ENCODE measurements at regions of chr16 and their contacts with region 1.

Region 1: GRCh38 chr16:25270577-25270976 is 12.9 kb upstream of the ZKSCAN2 start:
- DNase-seq: no peak
- ATAC-seq: no peak
- H3K4me3 ChIP-seq: no peak overlapping the region
- H3K27ac ChIP-seq: no peak overlapping the region
- H3K4me1 ChIP-seq: no peaks in the 10 kb centered on the region
- H3K27me3 ChIP-seq: no peaks in the 10 kb centered on the region

Region 2: DNA sequence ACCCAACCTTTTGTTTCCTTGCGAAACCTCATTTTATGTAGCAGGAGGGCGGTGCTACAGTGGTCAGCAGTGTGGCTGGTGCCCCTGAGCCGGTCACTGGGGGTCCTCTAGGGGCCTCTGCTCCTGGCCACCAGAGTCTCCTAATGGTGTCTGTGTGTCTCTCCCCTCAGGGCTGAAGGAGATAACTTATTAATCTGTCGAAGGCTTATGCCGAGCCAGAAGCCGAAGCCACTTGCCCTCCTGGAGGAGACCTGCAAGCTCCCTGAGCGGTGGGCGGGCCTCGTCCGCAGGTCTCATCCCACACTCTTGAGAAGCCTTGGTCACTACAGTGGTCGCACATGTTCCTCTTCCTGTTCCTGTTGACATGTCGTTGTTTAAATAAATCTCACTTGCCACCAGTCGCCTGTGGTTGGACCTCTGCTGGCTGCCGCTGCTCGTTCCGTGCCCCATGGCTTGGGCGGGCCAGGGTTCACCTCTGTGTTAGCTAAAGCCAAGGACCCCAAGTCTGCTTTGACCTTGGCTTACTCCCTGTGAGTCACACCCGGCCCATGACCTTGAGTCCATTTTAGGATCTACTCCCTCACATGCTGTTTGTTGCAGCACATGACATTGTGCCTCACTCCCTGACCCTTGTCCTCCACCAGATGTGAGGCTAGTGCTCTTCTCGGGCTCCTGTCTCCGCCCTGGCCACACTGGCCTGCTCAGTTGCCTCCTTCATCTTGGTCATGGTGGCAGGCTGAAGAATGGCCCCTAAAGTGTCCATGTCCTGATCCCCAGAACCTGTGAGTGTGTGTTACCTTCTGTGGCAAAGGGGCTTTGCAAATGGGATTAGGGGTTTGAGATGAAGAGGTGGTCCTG is 92.5 kb before region 1 on chr16:
- intact Hi-C with region 1: no loop called
- DNase-seq: no peak
- ATAC-seq: peak; percentile 26 to 29
- H3K4me3 ChIP-seq: no peak overlapping the region
- H3K27ac ChIP-seq: no peak overlapping the region
- H3K4me1 ChIP-seq: no peaks in the 10 kb centered on the region
- H3K27me3 ChIP-seq: no peaks in the 10 kb centered on the region

Region 3: GRCh38 chr16:25291580-25291979 is 21.0 kb after region 1 on chr16:
- intact Hi-C with region 1: no loop called
- DNase-seq: no peak
- ATAC-seq: no peak
- H3K4me3 ChIP-seq: no peak overlapping the region
- H3K27ac ChIP-seq: no peak overlapping the region
- H3K4me1 ChIP-seq: no peaks in the 10 kb centered on the region
- H3K27me3 ChIP-seq: no peaks in the 10 kb centered on the region

Region 4: DNA sequence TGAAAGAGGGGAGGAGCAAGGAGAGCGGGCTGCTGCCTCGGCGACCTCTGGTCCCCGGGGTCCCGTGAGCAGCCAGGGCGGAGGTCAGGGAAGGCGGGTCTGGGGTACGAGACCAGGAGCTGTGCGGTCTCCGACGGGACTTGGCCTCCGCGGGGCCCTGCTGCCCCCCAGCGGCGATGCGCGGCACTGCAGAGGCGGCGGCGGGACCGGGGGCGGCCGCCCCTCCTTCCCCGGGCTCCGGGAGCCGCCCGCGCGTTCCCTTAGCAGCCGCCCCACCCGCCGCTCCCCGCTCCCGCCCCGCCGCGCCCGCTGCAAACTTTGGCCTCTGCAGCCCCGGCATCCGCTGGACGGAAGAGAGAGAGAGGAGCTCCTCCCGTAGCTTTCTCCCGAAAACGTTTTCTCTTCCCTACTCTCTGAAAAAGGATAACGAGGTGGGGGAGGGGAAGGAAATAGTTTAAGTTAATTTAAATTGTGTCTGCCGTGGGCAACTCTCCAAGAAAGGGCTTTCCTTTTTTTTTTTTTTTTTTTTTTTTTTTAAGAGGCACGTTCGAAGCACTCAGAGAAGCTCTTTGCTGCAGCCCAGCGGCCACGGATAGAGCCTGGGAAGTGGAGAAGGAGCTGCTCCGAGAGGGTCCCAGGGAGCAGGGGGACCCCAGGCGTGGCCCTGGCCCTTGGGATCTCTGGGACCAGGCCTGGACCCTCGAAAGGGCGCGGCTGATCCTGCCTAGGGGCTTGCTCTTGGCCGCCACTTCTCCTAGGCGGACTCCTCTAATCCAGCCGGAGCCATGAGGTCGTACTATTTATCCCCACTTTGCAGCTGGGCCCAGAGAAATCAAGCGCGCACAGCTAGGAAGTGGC is 1839.3 kb after region 1 on chr16:
- intact Hi-C with region 1: loop called in 1 of 4 experiments (anchors 10 kb)
- DNase-seq: peak; percentile 86 to 95 (median 94)
- ATAC-seq: peak; percentile 96 to 98
- H3K4me3 ChIP-seq: peak overlapping the region; percentile 16
- H3K27ac ChIP-seq: peak overlapping the region; percentile 8
- H3K4me1 ChIP-seq: no peaks in the 10 kb centered on the region
- H3K27me3 ChIP-seq: no peaks in the 10 kb centered on the region

Measured in right cardiac atrium (tissue), 5 donors.